MCF 10A (cell line): ENCODE measurements at regions of chr1 and their contacts with region 1.

Region 1: DNA sequence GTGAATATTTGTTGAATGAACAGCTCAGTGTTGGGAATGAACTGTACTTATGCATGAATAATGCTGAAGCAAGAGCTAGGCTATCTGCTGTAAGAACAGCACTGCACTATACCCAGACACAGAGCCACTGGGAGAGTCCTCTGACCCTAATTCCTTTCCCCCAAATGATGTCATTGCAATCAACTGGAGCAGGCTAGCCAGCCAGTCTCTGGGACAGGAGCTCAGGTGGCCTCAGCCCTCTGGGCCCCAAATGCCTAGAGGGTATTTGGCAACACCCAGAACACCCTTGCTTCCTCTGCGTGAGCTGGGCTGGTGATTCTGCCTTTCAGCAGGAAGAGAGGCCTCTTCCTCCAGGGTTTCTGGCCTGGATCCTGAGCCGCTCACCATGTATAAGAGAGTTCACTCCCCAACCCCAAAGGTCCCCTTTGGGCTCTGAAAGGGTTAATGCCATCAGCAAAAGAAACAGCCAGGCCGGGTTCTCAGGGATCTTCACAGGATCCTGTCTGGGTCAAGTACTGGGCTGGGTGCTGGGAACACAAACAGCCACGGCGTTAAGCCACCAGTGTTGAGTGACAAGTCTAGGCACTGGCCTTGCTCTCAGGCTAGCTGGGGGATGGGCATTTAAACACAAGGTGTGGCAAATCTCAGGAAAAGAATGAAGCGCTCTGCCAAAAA is 3.7 kb upstream of the PADI4 start:
- DNase-seq: peak; percentile 67
- H3K4me3 Mint-ChIP-seq: no peak overlapping the region
- H3K27ac Mint-ChIP-seq: peak overlapping the region; percentile 35
- H3K4me1 Mint-ChIP-seq: peaks cover 41% of the 10 kb centered on the region
- H3K27me3 Mint-ChIP-seq: no peaks in the 10 kb centered on the region
- CTCF ChIP-seq: no peak

Region 2: DNA sequence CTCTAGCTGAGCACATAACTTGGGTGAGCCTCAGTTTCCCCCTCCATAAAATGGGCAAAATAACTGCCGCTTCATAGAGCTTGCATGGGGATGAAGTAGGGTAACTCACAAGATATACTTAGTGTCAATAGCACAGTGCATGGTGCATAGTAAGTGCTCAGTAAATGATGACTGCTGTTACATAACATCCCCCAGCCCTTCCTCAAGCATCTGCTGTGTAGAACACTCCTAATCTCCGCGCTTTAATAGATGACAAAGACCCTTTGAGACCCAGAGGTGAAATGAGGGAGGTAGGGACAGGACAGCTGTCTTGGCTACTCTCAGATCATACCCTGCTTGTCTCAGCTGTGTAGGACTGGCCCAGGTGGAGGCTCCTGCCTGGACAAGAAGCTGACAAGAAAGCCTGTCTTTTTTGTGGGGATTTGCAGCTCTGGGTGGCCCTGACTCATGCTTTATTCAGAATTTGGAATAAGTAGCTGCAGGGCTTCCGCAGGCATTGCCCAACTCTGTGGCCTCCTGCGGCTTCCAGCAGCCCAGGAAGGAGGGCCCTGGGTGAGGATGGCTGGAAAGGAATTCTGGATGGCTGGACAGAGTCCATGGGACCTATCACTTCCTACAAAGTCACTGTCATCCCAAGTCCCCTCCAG is 17.0 kb before region 1 on chr1:
- CTCF ChIA-PET with region 1: interaction called, 3 read pairs
- POLR2A ChIA-PET with region 1: interaction called, 34 read pairs
- intact Hi-C with region 1: no loop called
- DNase-seq: peak; percentile 96
- H3K4me3 Mint-ChIP-seq: no peak overlapping the region
- H3K27ac Mint-ChIP-seq: no peak overlapping the region
- H3K4me1 Mint-ChIP-seq: peaks cover 15% of the 10 kb centered on the region
- H3K27me3 Mint-ChIP-seq: no peaks in the 10 kb centered on the region
- CTCF ChIP-seq: no peak

Region 3: GRCh38 chr1:17293681-17294425 is 10.4 kb before region 1 on chr1:
- CTCF ChIA-PET with region 1: interaction called, 3 read pairs
- POLR2A ChIA-PET with region 1: interaction called, 34 read pairs
- intact Hi-C with region 1: no loop called
- DNase-seq: no peak
- H3K4me3 Mint-ChIP-seq: no peak overlapping the region
- H3K27ac Mint-ChIP-seq: no peak overlapping the region
- H3K4me1 Mint-ChIP-seq: peaks cover 37% of the 10 kb centered on the region
- H3K27me3 Mint-ChIP-seq: no peaks in the 10 kb centered on the region
- CTCF ChIP-seq: no peak